ENCODE measurements at regions of chr19 and their contacts with region 1.

Region 1: DNA sequence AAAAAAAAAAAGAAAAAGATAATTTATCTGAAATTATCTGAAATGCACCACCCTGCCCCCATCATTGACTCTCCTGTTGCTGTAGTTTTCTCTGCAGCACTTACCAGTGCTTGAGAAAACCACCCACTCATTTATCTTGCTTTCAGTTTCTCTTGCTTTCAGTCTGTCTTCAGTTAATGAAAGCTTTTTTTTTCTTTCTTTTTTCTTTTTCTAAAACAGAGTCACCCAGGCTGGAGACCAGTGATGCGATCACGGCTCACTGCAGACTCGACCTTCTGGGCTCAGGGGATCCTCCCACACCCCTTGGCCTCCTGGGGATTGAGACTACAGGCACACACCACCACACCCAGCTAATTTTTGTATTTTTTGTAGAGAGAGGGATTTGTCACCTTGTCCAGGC is 4.3 kb upstream of the ACP5 start:
- DNase-seq: no peak
- H3K4me3 ChIP-seq: no peak overlapping the region
- H3K27ac ChIP-seq: no peak overlapping the region
- H3K4me1 ChIP-seq: peaks cover 15% of the 10 kb centered on the region
- H3K27me3 ChIP-seq: no peaks in the 10 kb centered on the region
- CTCF ChIP-seq: no peak

Region 2: DNA sequence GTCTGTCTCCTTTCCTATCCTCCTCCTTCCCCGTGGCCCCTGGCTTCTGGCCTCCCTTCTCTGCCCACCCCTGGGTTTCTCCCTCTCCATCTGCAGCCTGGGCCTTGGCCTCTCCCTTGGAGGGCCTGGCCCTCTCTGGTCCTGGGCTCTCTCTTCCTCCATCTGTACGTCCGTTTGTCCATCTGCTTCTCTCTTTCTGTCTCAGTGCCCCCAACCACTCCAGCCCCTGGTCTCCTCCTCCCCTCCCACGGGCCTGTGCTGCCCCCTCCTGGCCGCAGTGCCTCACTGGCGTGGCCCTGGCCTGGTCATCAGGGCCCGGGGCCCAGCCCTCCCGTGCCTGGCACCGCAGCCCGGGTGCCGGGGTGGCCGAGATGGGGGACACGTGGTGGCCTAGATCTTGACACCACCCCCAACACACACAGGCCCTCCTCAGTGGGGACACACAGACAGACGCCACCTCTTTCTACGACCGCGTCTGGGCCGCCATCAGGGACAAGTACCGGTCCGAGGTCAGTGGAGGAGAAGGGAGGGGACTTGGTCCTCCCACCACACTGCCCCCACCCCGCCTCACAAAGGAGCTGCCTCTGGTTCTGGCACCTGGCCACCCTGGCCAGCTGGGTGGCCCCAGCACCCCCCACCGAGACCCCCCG is 135.0 kb before region 1 on chr19:
- CTCF ChIA-PET with region 1: interaction called, 11 read pairs
- dilution Hi-C with region 1: no loop called
- in situ Hi-C with region 1: no loop called
- intact Hi-C with region 1: no loop called
- DNase-seq: no peak
- H3K4me3 ChIP-seq: no peak overlapping the region
- H3K27ac ChIP-seq: no peak overlapping the region
- H3K4me1 ChIP-seq: peaks cover 16% of the 10 kb centered on the region
- H3K27me3 ChIP-seq: no peaks in the 10 kb centered on the region
- CTCF ChIP-seq: peak; percentile 51 to 75

Region 3: GRCh38 chr19:11482384-11483050 is 99.2 kb before region 1 on chr19:
- CTCF ChIA-PET with region 1: no interaction called
- dilution Hi-C with region 1: no loop called
- in situ Hi-C with region 1: loop called in 1 of 2 experiments (anchors 5 kb)
- intact Hi-C with region 1: no loop called
- DNase-seq: peak; percentile 69
- H3K4me3 ChIP-seq: peak overlapping the region; percentile 31 to 40 (median 35)
- H3K27ac ChIP-seq: no peak overlapping the region
- H3K4me1 ChIP-seq: peaks cover 9% of the 10 kb centered on the region
- H3K27me3 ChIP-seq: peaks cover 25% of the 10 kb centered on the region
- CTCF ChIP-seq: peak; percentile 61 to 91

Measured in mammary epithelial cell (primary cell).